Activated CD4-positive, alpha-beta T cell treated with anti-CD3 and anti-CD28 coated beads, Interleukin-2, amount 10 ng/mL, durations not matched to agents 7 days and 5 days (primary cell): ENCODE measurements at regions of chr12 and their contacts with region 1.

Region 1: DNA sequence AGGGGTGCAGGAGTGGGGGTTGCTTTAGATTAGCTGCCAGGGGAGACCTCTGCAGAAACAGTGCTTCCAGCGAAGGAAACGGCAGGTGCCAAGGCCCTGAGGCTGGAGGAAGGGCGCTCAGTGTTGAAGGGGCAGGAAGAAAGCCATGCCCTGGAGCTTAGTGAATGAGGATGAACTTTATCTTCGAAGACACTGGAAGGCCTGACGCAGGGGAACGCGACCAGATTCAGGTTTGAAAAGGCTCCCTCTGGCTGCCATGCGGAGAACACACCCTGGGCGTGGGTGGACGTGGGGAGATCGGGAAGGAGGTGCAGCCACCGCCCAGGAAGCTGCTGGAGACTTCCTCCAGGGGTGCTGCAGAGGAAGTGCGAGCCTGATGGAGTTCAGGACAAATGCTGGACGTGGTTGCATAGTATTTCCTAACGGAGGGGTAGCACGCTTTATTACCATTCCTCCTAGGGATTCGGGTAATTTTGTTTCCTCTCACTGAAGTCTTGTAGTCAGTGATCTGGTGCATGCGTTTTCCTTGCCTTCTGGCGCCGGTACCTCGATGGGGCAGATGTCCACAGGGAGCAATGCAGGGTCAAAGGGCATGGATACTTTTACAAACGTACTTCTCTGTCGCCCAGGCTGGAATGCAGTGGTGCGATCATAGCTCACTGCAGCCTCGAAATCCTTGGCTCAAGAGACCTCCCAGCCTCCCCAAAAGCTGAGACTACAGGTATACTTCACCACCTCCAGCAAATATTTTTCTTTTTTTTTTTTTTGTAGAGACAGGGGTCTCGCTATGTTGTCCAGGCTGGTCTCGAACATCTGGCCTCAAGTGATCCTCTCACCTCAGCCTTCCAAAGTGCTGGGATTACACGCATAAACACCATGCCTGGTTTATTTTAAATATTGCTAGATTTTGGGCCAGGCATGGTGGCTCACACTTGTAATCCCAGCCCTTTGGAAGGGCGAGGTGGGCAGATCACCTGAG is 26.4 kb upstream of the UBC start:
- DNase-seq: peak; percentile 89
- H3K4me3 Mint-ChIP-seq: no peak overlapping the region
- H3K27ac Mint-ChIP-seq: no peak overlapping the region
- H3K4me1 Mint-ChIP-seq: peaks cover 26% of the 10 kb centered on the region
- H3K27me3 Mint-ChIP-seq: no peaks in the 10 kb centered on the region

Region 2: DNA sequence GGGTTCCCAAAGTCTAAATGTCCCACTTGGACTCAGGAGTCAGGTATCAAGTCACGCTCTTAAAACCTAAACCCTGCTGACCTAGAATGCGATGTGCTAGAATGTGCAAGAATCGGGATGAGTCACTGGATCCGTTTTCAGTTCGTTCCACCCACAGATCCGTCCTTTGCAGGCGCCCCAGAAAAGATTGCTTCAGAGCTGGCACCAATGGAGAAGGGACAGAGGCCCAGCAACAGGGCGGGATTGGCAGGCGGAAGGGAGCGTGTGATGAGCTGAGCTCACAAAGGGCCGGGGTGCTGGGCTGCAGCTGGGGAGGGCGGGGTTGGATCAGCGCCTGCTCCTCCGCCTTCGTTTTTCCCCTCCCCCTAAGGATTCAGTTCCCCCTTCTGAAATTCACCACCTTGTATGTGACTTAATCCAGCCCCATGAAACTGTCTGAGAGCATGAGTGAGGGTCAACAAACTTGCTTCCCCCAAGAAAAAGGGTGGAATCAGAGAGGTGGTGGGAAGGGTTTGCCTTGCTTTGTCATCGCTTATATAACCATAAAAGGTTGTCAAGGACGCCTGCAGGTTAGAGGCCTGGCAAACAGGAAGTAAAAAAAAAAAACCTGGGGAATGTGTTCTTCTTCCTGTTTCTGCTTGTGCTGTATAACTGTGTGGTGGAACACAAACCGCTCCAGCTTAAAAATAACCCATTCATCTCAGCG is 23.6 kb before region 1 on chr12:
- CTCF ChIA-PET with region 1: interaction called, 122 read pairs
- POLR2A ChIA-PET with region 1: interaction called, 15 read pairs
- DNase-seq: peak; percentile 97
- H3K4me3 Mint-ChIP-seq: peak overlapping the region; percentile 99
- H3K27ac Mint-ChIP-seq: peak overlapping the region; percentile 100
- H3K4me1 Mint-ChIP-seq: peaks cover 85% of the 10 kb centered on the region
- H3K27me3 Mint-ChIP-seq: no peaks in the 10 kb centered on the region

Region 3: DNA sequence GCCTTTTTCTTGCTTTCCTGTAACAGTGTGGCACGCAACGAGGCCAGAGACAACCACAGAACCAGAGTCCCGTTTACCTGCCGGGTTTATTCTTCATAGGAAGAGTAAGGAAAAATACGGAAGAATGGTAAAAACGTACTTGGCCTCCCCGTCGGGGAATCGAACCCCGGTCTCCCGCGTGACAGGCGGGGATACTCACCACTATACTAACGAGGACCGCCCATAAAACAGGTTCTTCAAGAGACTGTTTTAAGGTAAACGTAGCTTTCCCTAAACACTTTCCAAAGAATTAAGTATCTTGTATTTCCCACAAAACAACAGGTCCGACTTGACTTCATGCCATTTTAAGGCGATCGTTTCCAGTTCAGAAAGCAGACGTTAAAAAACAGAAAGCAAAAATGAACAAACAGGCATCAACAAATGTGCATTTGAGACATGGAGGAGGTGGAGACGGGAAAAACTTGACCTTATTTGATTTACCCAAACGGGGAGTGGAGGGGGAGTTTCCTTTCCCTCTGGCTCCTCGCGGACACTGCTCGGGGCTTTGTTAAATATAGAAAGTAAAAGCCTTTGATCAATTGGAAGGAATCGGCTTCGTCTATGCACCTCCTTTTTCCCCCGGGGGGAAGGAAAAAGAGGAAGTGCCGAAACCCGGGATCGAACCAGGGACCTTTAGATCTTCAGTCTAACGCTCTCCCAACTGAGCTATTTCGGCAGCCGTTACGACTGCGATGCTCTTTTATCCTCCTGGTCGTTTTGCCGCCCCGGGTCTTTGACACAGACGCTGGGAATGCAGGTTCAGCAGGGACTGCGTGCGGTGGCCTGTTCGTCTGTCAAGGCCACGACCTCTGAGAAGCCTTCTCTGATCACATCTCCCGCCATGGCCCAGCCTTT is 13.4 kb before region 1 on chr12:
- CTCF ChIA-PET with region 1: interaction called, 122 read pairs
- POLR2A ChIA-PET with region 1: interaction called, 3 read pairs
- DNase-seq: peak; percentile 91
- H3K4me3 Mint-ChIP-seq: peak overlapping the region; percentile 89
- H3K27ac Mint-ChIP-seq: peak overlapping the region; percentile 96
- H3K4me1 Mint-ChIP-seq: peaks cover 37% of the 10 kb centered on the region
- H3K27me3 Mint-ChIP-seq: peaks cover 7% of the 10 kb centered on the region

Region 4: GRCh38 chr12:124952801-124953200 is 12.0 kb after region 1 on chr12:
- CTCF ChIA-PET with region 1: interaction called, 20 read pairs
- POLR2A ChIA-PET with region 1: interaction called, 3 read pairs
- DNase-seq: no peak
- H3K4me3 Mint-ChIP-seq: no peak overlapping the region
- H3K27ac Mint-ChIP-seq: no peak overlapping the region
- H3K4me1 Mint-ChIP-seq: no peaks in the 10 kb centered on the region
- H3K27me3 Mint-ChIP-seq: no peaks in the 10 kb centered on the region

Region 5: GRCh38 chr12:125079648-125080645 is 139.1 kb after region 1 on chr12:
- CTCF ChIA-PET with region 1: no interaction called
- POLR2A ChIA-PET with region 1: no interaction called
- DNase-seq: no peak
- H3K4me3 Mint-ChIP-seq: no peak overlapping the region
- H3K27ac Mint-ChIP-seq: no peak overlapping the region
- H3K4me1 Mint-ChIP-seq: peaks cover 1% of the 10 kb centered on the region
- H3K27me3 Mint-ChIP-seq: no peaks in the 10 kb centered on the region

Region 6: DNA sequence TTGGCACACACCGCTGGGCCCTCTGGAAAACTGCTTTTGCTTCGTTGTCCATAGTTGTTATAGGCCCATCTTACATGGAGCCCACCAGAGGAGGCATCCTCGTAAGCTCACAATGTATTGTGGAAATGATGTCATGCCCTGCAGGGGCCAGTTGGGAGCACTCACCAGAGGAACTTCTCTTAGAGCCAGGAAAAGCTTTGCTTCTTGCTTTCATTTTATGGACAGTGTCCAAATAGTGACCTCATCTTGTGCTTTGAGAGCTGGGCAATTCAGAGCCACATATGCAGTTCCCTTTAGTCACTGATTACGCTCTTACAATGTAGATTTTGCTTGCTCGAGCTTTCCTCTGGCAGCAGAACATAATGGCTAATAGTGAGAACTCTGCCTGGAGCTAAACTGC is 400.0 kb after region 1 on chr12:
- CTCF ChIA-PET with region 1: no interaction called
- POLR2A ChIA-PET with region 1: no interaction called
- DNase-seq: no peak
- H3K4me3 Mint-ChIP-seq: no peak overlapping the region
- H3K27ac Mint-ChIP-seq: no peak overlapping the region
- H3K4me1 Mint-ChIP-seq: no peaks in the 10 kb centered on the region
- H3K27me3 Mint-ChIP-seq: peaks cover 9% of the 10 kb centered on the region